Stomach (tissue), 19 donors: ENCODE measurements at regions of chr3 and their contacts with region 1.

Region 1: GRCh38 chr3:124492811-124493210 is 237.4 kb upstream of the UMPS start:
- DNase-seq: peak; percentile 69 to 76
- H3K4me3 ChIP-seq: no peak overlapping the region
- H3K27ac ChIP-seq: no peak overlapping the region
- H3K4me1 ChIP-seq: peaks cover 0 to 4% (median 0%) of the 10 kb centered on the region in 4 donors
- H3K27me3 ChIP-seq: no peaks in the 10 kb centered on the region
- CTCF ChIP-seq: peak in 4 of 7 experiments; percentile 31 to 53 (median 42)
- EP300 ChIP-seq: no peak
- POLR2A ChIP-seq: no peak

Region 2: DNA sequence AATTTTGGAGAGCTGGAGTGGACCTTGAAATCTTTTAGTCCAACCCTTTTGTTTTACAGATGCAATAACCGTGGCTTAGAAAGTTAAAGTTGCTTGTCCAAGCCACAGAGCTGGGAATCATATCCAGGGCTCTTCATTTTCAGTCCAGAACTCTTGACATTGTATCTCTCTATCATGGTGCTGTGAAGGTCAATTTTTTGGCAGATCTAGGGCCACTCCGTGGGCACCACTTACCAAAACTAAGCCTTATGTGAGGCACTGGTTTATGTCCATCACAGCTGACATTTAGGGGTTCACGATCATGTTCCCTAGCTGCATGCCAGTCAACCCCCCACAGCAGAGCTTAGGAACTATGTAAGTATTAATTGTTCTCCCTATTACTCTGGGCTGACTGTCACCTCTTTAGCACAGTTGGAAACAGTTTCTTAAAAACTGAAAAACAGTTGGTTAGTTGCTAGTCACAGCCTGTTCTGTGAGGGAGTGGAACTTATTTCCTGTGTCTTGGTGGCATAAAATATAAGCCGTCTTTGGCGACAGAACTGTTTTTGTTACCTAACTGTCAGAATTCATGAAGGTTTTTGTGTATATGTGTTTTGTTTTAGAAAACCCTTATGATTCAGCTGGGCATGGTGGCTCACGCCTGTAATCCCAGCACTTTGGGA is 47.9 kb after region 1 on chr3:
- intact Hi-C with region 1: loop called (anchors 10 kb)
- DNase-seq: no peak
- H3K4me3 ChIP-seq: no peak overlapping the region
- H3K27ac ChIP-seq: no peak overlapping the region
- H3K4me1 ChIP-seq: no peaks in the 10 kb centered on the region
- H3K27me3 ChIP-seq: no peaks in the 10 kb centered on the region
- CTCF ChIP-seq: no peak
- EP300 ChIP-seq: no peak
- POLR2A ChIP-seq: no peak